ENCODE measurements at regions of chr22 and their contacts with region 1.

Region 1: DNA sequence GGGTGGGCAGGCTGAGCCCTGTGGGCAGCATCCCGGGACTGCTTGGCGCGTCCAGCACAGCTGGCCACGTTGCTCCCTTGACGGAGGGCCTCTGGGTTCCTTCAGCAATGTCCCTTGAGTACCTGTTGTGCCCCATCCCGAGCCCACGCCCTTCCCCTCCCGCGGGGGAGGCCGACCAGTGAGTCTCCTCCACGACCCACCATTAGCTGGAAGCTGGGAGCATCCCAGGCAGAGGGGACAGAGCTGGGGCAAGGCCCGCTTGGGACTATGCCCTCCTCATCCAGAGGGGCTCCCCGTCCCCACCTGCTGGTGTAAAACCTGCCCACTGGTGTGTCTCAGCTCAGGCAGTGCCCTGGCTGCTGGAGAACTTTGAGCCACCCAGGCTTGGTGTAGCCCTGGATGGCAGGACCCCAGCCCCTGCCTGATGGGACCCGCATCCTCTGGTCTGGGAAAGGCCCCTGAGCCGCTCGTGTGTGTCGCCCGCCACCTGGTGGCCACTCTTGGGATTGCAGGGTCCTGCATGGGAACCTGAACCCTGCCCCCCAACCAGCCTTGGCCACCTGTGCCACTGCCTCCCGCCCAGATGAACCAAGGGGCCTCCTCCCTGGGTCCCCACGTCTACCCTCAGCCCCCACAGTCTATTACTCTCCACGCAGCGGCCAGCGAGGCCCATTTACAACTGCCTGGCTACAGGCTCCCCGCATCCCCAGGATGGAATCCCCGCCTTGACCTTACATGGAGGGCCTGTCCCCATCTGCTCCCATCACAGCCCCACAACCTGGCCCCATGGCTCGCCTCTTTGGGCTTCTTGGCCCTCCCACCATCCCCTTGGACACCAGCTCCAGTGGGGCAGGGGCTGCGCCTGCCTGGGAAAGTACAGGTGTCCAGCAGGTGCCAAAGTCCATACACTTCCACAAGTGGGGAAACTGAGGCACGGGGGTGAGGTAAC is 16.6 kb upstream of the ARHGAP8 start:
- DNase-seq: peak; percentile 69 to 76
- H3K4me3 ChIP-seq: no peak overlapping the region
- H3K27ac ChIP-seq: no peak overlapping the region
- H3K4me1 ChIP-seq: no peaks in the 10 kb centered on the region
- H3K27me3 ChIP-seq: no peaks in the 10 kb centered on the region
- CTCF ChIP-seq: peak; percentile 89 to 100 (median 94)
- POLR2A ChIP-seq: no peak

Region 2: DNA sequence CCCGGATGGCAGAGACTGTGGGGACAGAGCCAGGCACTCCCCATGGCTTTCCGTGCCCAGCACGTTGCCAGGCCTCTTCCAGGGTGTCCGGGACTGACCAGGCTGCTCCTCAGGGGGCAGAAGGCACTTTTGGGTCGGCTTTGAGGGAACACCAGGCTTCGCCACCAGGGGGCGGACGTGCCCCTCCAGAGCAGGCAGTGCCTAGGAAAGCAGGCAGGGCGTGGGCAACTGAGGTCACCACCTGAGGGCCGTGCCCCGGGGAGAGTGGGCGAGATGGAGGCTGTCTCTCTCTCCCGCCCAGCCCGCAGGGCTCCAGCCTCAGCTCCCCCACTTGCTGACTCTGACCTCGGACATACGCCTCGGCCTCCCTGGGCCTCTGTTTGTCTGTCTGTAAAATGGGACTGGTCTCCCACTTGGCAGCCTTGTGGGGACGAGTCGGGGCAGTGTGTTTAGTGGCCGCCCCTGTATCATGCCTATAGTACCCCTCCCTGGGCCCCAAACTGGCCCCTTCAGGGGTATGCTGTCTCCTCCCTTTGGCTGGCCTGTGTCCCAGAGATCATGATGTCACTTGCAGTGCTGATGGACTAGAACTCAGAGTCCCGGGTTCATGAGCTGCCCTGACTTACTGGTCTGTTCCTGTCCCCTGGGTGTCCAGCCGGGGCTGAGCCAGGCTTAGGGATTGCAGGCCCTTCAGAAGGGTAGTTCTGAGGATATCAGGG is 38.2 kb before region 1 on chr22:
- intact Hi-C with region 1: loop called (anchors 2 kb)
- DNase-seq: peak; percentile 77 to 79
- H3K4me3 ChIP-seq: no peak overlapping the region
- H3K27ac ChIP-seq: no peak overlapping the region
- H3K4me1 ChIP-seq: peaks cover 3 to 12% of the 10 kb centered on the region in 2 donors
- H3K27me3 ChIP-seq: no peaks in the 10 kb centered on the region
- CTCF ChIP-seq: peak; percentile 74 to 94 (median 90)
- POLR2A ChIP-seq: no peak

Region 3: DNA sequence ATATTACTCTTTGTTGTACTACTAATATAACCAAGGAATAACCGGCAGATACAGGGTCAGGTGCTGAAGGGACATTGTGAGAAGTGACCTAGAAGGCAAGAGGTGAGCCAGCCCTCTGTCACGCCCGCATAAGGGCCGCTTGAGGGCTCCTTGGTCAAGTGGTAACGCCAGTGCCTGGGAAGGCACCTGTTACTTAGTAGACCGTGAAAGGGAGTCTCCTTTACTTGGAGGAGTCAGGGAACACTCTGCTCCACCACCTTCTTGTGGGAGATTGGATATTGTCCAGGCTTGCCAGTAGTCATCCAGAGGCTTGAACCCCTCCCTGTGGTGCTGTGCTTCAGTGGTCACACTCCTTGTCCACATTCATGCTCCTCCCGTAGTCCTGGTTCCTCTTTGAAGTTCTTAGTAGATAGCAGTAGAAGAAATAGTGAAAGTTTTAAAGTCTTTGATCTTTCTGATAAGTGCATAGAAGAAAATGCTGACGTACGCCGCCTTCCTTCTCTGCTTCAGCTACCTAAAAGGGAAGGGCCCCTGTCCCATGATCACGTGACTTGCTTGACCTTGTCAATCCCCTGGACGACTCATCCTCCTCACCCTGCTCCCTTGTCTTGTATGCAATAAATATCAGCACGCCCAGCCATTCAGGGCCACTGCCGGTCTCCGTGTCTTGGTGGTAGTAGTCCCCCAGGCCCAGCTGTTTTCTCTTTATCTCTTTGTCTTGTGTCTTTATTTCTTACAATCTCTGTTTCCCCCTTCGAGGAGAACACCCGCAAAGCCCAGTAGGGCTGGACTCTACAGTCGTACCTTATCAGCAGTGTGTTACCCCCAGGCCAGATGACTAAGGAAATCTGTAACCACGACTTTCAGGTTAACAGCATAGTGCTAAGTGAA is 434.0 kb after region 1 on chr22:
- intact Hi-C with region 1: no loop called
- DNase-seq: peak; percentile 91 to 95
- H3K4me3 ChIP-seq: no peak overlapping the region
- H3K27ac ChIP-seq: peak overlapping the region; percentile 25 to 56 (median 43)
- H3K4me1 ChIP-seq: peaks cover 24 to 27% of the 10 kb centered on the region in 2 donors
- H3K27me3 ChIP-seq: no peaks in the 10 kb centered on the region
- CTCF ChIP-seq: peak in 1 of 6 experiments; percentile 8
- POLR2A ChIP-seq: no peak

Region 4: DNA sequence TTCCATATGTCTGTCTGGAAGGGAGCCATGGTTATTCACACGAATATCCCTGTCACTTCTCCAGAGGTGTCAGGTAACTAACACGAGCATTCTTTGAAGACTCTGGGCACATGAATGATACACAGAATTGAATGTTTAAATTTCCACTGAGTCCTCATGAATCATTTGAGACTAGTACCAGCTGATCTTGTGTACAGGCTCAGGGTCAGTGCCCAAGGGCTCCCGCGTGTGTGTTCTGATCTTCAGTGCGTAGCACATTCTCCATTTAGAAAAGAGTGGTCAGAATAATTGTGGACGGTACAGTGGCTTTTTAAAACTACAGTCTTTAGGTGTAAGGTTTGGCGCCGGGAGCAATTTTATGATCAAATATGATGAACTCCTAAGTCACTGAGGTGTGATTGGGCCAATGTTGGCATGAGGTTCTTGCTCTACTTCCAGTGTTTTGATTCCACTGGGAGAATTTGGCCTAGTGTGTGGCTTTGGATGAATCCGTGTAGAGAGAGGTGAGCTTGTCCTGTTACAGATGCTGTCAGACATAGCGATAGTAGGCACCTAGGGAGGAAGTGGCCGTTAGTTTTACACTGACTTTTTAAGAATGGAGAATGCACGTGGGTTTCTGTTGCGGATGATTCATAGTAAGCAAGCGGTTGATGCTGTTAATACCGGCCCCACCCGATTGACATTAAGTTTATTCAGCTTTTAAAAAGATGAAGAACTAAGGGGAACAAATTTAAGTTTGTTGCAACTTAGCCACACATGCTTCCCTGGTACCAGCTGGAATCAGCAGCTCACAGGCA is 450.1 kb after region 1 on chr22:
- intact Hi-C with region 1: no loop called
- DNase-seq: no peak
- H3K4me3 ChIP-seq: no peak overlapping the region
- H3K27ac ChIP-seq: no peak overlapping the region
- H3K4me1 ChIP-seq: peaks cover 0 to 19% of the 10 kb centered on the region in 2 donors
- H3K27me3 ChIP-seq: no peaks in the 10 kb centered on the region
- CTCF ChIP-seq: no peak
- POLR2A ChIP-seq: no peak